ENCODE measurements at regions of chr2 and their contacts with region 1.

Region 1: GRCh38 chr2:159090514-159091201 is 122.2 kb downstream of the TANC1 start:
- DNase-seq: no peak
- ATAC-seq: no peak
- H3K4me3 ChIP-seq: no peak overlapping the region
- H3K27ac ChIP-seq: peak overlapping the region; percentile 63
- H3K4me1 ChIP-seq: peaks cover 45% of the 10 kb centered on the region
- H3K27me3 ChIP-seq: no peaks in the 10 kb centered on the region
- CTCF ChIP-seq: no peak

Region 2: GRCh38 chr2:159044804-159045286 is 45.8 kb before region 1 on chr2:
- CTCF ChIA-PET with region 1: no interaction called
- POLR2A ChIA-PET with region 1: no interaction called
- intact Hi-C with region 1: loop called (anchors 5 kb)
- DNase-seq: peak; percentile 41
- ATAC-seq: peak; percentile 59
- H3K4me3 ChIP-seq: peak overlapping the region; percentile 1; the same call in 1 of the 2 replicates
- H3K27ac ChIP-seq: peak overlapping the region; percentile 62
- H3K4me1 ChIP-seq: peaks cover 51% of the 10 kb centered on the region
- H3K27me3 ChIP-seq: no peaks in the 10 kb centered on the region
- CTCF ChIP-seq: no peak

Region 3: GRCh38 chr2:159064446-159065301 is 26.0 kb before region 1 on chr2:
- CTCF ChIA-PET with region 1: no interaction called
- POLR2A ChIA-PET with region 1: interaction called, 5 read pairs
- intact Hi-C with region 1: loop called (anchors 2 kb)
- DNase-seq: peak; percentile 63
- ATAC-seq: peak; percentile 97
- H3K4me3 ChIP-seq: no peak overlapping the region
- H3K27ac ChIP-seq: peak overlapping the region; percentile 64
- H3K4me1 ChIP-seq: peaks cover 32% of the 10 kb centered on the region
- H3K27me3 ChIP-seq: no peaks in the 10 kb centered on the region
- CTCF ChIP-seq: no peak

Region 4: GRCh38 chr2:159409116-159409800 is 318.6 kb after region 1 on chr2:
- CTCF ChIA-PET with region 1: no interaction called
- POLR2A ChIA-PET with region 1: no interaction called
- intact Hi-C with region 1: no loop called
- DNase-seq: no peak
- ATAC-seq: no peak
- H3K4me3 ChIP-seq: no peak overlapping the region
- H3K27ac ChIP-seq: no peak overlapping the region
- H3K4me1 ChIP-seq: no peaks in the 10 kb centered on the region
- H3K27me3 ChIP-seq: no peaks in the 10 kb centered on the region
- CTCF ChIP-seq: no peak